ENCODE measurements at regions of chrX and their contacts with region 1.

Region 1: DNA sequence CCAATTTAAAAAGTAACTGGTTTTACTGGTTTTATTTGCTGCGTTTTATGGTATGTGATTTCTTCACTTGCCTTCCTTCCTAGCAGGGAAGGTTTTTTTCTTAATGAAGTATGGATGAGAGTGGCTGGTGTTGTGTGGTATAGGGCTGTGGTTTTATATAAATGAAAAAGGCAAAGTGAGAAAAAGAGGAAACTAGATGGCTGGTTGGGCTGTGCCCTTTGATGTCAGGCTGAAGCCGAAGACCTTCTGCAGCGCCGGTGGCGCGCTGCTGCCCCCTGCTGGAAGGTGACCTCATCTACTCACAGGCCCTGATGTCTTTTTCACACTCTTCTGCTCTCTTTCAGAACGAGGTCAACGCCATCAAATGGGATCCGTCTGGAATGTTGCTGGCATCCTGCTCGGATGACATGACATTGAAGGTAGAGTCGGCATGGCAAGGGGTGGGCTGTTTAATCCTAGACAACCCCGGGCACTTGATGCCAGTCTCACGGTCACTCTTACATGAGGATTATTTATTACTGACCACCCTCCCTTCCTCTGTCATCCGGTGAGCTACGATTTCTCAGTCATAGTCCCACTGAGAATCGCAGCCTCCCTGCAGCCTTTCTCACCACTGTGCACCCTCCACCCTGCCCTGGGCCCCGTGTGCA is 56.6 kb downstream of the GPR143 start:
- DNase-seq: peak; percentile 79
- CTCF ChIP-seq: peak; percentile 87

Region 2: GRCh38 chrX:8815464-8816065 is 893.5 kb before region 1 on chrX:
- in situ Hi-C with region 1: loop called (anchors 25 kb)
- DNase-seq: peak; percentile 32
- CTCF ChIP-seq: peak; percentile 71

Region 3: GRCh38 chrX:8971116-8971515 is 737.9 kb before region 1 on chrX:
- in situ Hi-C with region 1: loop called (anchors 25 kb)
- DNase-seq: peak; percentile 12
- CTCF ChIP-seq: no peak

Region 4: DNA sequence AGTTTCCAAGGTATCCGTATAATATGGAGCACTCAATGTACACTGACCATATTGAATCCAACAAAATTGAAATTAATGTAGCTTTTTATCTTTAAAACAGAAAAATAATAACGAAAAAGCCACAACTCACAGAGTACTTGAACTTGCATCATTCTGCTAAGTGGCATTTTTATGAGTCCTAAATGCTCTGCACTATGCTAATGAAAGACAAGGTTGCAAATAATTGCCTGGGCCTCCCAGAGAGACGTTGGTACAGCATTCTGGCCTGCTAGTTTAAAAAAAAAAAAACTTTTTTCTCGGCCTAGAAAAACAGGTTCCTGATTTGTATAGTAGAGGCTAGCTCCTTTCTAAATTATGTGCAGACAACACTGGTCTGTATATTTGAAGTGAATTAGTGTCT is 670.8 kb before region 1 on chrX:
- in situ Hi-C with region 1: no loop called
- DNase-seq: no peak
- CTCF ChIP-seq: no peak

Region 5: DNA sequence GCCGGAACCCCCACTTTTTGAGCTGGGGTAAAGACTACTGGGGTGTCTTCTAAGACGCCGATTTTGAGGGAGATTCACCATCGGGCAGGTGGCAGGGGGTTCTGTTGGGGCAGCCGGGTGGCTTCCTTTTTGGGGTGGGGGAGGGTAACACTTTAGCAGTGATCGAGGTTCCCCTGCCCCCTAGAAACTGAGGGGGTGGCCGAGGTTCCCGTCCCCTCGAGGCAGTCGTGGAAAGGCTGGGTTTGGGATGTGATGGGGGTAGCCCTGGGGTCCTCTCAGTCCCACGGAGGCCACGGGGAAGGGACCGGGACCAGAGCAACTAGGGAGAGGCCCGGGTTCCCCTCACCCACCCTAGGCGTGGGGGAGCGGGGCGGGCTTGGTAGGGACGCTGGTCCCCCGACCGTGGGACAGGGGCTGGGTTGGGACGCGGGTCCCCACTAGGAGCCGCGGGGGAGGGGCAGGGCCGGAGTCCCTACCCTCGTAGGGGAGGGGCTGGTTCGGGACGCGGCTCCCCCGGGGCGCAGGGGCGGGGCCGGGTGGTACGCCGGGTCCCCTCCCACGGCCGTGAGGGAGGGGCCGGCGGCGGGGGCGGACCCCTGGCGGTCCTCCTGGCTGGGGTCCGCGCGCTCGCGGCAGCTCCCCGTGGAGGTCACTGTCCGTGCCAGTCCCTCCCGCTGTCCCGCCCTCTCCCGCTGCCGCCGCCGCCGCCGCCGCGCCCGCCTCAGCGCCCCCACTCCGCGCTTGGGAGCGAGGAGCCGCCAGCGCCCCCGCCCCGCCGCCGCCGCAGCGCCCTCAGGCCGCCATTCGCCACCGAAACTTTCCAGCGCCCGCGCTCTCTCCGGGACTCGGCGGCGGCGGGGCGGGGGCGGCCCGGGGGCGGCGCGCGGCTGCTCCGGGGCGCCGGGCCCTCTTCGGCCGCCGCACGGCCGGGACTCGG is 244.3 kb before region 1 on chrX and contains the start of gene TBL1X:
- in situ Hi-C with region 1: loop called (anchors 25 kb)
- DNase-seq: peak; percentile 66
- CTCF ChIP-seq: no peak

Region 6: DNA sequence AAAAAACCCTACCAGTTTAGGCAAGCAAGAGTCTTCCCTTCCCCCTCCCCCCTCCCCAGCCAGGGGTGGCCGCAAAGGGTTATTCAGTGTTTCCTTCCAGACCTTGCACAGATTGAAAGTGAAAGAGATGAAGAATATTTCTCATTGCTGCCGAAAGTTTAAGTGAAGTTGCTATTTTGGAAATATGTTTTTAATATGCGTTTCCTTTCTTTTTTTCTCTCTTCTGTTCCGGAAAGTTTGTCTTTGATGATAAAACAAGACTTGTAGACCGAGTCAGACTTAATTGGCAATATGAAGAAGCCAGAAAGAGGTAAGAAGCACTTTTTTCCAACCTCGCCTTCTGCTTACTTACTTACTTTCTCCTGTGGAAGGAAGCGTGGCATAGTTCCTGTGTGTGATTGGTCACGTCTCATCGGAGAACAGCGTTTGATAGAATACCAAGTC is 389.3 kb after region 1 on chrX:
- in situ Hi-C with region 1: no loop called
- DNase-seq: peak; percentile 66
- CTCF ChIP-seq: no peak